Activated CD4-positive, alpha-beta memory T cell treated with anti-CD3 and anti-CD28 coated beads, Interleukin-2, amount 10 ng/mL, durations not matched to agents 7 days and 5 days (primary cell): ENCODE measurements at regions of chr1 and their contacts with region 1.

Region 1: DNA sequence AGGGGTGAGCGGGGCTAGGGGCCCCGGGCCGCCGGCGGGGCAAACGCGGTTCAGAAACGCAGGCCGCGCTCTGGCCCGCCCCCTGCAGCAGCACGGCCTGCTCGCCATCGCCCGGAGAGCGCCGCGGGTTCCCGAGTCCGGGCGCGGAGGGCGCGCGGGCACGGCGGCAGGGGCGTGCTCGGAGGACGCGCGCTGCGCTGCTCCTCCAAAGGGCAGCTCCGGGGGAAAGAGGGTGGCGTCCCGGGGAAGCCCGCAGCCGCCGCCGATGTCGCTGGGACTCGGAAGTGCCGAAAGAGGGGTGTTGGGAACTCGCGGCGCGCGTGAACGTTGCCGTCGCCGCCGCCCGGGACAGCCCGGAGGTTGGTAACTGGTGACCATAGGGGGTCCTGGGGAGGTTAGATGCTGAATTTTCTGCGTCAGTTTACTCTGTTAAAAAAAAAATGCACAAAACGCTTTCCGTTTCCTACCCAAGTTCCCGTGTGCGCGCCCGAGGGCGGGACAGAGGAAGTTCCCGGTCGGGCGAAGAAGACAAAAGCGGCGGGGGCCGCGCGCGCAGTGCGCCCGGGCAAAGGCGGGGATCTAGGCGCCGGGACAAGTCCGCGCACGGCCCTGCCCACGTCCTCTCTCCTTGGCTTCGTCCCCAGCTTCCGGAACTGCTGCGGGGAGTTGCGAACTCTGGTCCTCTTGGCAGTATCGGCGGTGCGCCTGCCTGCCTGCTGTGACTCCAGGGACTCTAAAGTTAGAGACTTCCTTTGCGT is at the start of gene HHAT:
- DNase-seq: peak; percentile 60
- H3K4me3 Mint-ChIP-seq: peak within 1 kb of the TSS; percentile 93
- H3K27ac Mint-ChIP-seq: peak within 1 kb of the TSS; percentile 72
- H3K4me1 Mint-ChIP-seq: peaks cover 37% of the 10 kb centered on the region
- H3K27me3 Mint-ChIP-seq: peaks cover 28% of the 10 kb centered on the region
- total RNA-seq, gene HHAT: 0.76 to 1.3 TPM

Region 2: GRCh38 chr1:210342986-210343780 is 14.3 kb after region 1 on chr1:
- CTCF ChIA-PET with region 1: interaction called, 9 read pairs
- POLR2A ChIA-PET with region 1: interaction called, 20 read pairs
- DNase-seq: no peak
- H3K4me3 Mint-ChIP-seq: no peak overlapping the region
- H3K27ac Mint-ChIP-seq: no peak overlapping the region
- H3K4me1 Mint-ChIP-seq: peaks cover 24% of the 10 kb centered on the region
- H3K27me3 Mint-ChIP-seq: peaks cover 8% of the 10 kb centered on the region

Region 3: GRCh38 chr1:210360852-210361477 is 32.0 kb after region 1 on chr1:
- CTCF ChIA-PET with region 1: interaction called, 13 read pairs
- POLR2A ChIA-PET with region 1: no interaction called
- DNase-seq: no peak
- H3K4me3 Mint-ChIP-seq: no peak overlapping the region
- H3K27ac Mint-ChIP-seq: no peak overlapping the region
- H3K4me1 Mint-ChIP-seq: peaks cover 2% of the 10 kb centered on the region
- H3K27me3 Mint-ChIP-seq: peaks cover 9% of the 10 kb centered on the region

Region 4: DNA sequence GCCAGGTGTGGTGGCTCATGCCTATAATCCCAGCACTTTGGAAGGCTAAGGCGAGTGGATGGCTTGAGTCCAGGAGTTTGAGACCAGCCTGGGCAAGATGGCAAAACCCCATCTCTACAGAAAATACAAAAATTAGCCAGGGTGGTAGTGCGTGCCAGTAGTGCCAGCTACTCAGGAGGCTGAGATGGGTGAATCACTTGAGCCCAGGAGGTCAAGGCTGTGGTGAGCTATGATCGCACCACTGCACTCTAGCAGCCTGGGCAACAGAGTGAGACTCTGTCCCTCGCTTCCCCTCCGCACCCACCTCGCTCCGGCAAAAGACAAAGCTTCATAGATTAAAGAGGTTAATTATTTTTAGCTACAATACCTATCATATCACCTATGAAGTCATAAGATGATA is 99.8 kb after region 1 on chr1:
- CTCF ChIA-PET with region 1: no interaction called
- POLR2A ChIA-PET with region 1: no interaction called
- DNase-seq: no peak
- H3K4me3 Mint-ChIP-seq: no peak overlapping the region
- H3K27ac Mint-ChIP-seq: no peak overlapping the region
- H3K4me1 Mint-ChIP-seq: no peaks in the 10 kb centered on the region
- H3K27me3 Mint-ChIP-seq: peaks cover 10% of the 10 kb centered on the region